ENCODE measurements at regions of chr1 and their contacts with region 1.

Region 1: DNA sequence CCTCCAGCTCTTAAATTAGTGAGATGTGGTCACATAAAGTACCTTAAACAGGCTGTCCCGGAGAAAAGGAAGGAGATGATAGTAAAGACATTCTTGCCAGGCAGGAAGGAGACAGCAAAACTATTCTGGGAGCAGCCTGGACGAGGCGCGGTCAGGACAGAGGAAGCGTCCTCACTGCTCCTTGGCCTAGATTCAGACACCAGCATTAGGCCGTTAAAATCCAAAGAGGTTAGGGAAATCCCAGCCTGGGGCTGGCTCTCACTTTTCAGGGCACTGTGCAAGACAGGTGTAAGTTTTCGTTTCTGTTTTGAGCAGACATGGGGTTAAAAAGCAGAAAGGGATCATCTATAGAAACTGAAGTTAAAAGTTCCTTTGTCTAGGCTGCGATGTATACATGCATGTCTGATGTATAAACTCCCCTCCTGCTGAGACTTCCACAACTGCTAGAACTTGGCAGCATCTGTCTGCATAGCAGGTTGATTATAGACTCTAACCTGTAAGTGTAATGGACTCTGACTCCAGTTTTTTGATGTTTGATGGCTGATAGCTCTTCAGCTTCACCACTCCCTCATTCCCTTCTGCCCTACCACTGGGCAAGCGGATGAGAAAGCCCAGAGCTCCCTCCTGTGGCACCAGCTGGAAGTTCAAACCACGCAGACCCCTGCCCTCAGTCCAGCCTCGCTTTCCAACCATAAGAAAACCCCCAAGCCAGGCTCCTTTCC is 21.5 kb downstream of the STPG1 start:
- DNase-seq: peak; percentile 72
- H3K4me3 ChIP-seq: no peak overlapping the region; a peak in 1 of 4 replicates
- H3K27ac ChIP-seq: peak overlapping the region in 1 of 2 experiments; percentile 37; a peak in 1 of 4 replicates
- H3K4me1 ChIP-seq: peaks cover 0 to 15% of the 10 kb centered on the region in 2 experiments; a peak in 3 of 4 replicates
- H3K27me3 ChIP-seq: no peaks in the 10 kb centered on the region
- CTCF ChIP-seq: peak; percentile 74
- EP300 ChIP-seq: no peak
- RAD21 ChIP-seq: peak; percentile 89

Region 2: GRCh38 chr1:24157918-24158481 is 234.0 kb before region 1 on chr1:
- CTCF ChIA-PET with region 1: interaction called, 16 read pairs
- POLR2A ChIA-PET with region 1: no interaction called
- DNase-seq: peak; percentile 48
- H3K4me3 ChIP-seq: no peak overlapping the region
- H3K27ac ChIP-seq: no peak overlapping the region
- H3K4me1 ChIP-seq: peaks cover 0 to 11% of the 10 kb centered on the region in 2 experiments; a peak in 1 of 4 replicates
- H3K27me3 ChIP-seq: peaks cover 18% of the 10 kb centered on the region; the same call in 1 of the 2 replicates
- CTCF ChIP-seq: peak; percentile 44
- EP300 ChIP-seq: no peak
- RAD21 ChIP-seq: no peak

Region 3: DNA sequence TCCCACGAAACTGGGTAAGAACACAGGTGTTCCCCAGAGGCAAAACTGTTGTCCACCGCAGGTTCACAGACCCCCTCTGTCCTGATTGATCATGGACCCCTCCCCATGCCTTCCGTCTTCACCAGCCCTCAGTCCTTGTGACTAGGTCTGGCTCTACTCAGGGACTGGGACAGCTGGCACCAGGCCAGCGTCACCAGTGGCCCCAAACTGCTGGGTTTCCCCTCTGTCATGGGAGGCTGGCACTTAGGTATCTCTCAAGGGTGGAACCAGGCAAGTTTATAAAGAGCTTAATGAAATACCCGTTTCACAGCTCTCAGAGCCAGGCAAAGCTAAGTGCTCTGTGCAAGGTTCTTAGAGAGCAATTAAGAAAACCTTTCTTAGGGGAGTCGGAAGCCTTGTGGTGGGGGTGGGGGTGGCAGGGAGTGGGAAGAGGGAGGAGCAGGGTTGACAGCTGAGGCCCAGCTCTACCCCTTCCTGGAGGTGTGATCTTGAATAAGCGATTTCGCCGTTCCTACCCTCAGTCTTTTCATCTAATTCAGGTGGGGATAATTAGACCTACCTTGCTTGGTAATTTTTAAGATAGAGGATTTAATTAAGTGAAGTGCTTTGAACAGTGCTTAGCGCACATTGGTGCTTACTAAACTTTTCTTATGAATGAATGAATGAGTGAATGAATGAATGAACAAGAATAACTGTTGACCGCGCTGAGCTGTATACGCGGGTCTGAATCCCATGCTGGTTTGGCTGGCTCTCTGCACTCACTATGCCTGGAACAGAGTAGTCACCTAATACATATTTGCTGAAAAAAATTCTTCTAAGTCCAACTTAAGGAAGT is 169.8 kb before region 1 on chr1:
- CTCF ChIA-PET with region 1: interaction called, 21 read pairs
- POLR2A ChIA-PET with region 1: no interaction called
- DNase-seq: no peak
- H3K4me3 ChIP-seq: no peak overlapping the region
- H3K27ac ChIP-seq: no peak overlapping the region
- H3K4me1 ChIP-seq: no peaks in the 10 kb centered on the region; a peak in 1 of 4 replicates
- H3K27me3 ChIP-seq: peaks cover 15% of the 10 kb centered on the region; the same call in 1 of the 2 replicates
- CTCF ChIP-seq: no peak
- EP300 ChIP-seq: no peak
- RAD21 ChIP-seq: no peak

Region 4: GRCh38 chr1:24321697-24322469 is 70.2 kb before region 1 on chr1:
- CTCF ChIA-PET with region 1: interaction called, 18 read pairs
- POLR2A ChIA-PET with region 1: no interaction called
- DNase-seq: no peak
- H3K4me3 ChIP-seq: no peak overlapping the region
- H3K27ac ChIP-seq: no peak overlapping the region
- H3K4me1 ChIP-seq: peaks cover 0 to 9% of the 10 kb centered on the region in 2 experiments; a peak in 1 of 4 replicates
- H3K27me3 ChIP-seq: 0 out of 2 replicates have a peak, but pooled peaks cover 17% of the 10 kb centered on the region
- CTCF ChIP-seq: no peak
- EP300 ChIP-seq: no peak
- RAD21 ChIP-seq: no peak

Region 5: GRCh38 chr1:24374891-24375786 is 16.9 kb before region 1 on chr1:
- CTCF ChIA-PET with region 1: interaction called, 25 read pairs
- POLR2A ChIA-PET with region 1: no interaction called
- DNase-seq: no peak
- H3K4me3 ChIP-seq: no peak overlapping the region
- H3K27ac ChIP-seq: 0 out of 4 replicates have a peak overlapping the region, but pooled peaks of 1 of the 2 experiments have one; percentile 10
- H3K4me1 ChIP-seq: no peaks in the 10 kb centered on the region
- H3K27me3 ChIP-seq: no peaks in the 10 kb centered on the region
- CTCF ChIP-seq: no peak
- EP300 ChIP-seq: no peak
- RAD21 ChIP-seq: no peak

Region 6: GRCh38 chr1:24438423-24438901 is 46.4 kb after region 1 on chr1:
- CTCF ChIA-PET with region 1: no interaction called
- POLR2A ChIA-PET with region 1: no interaction called
- DNase-seq: peak; percentile 70
- H3K4me3 ChIP-seq: no peak overlapping the region
- H3K27ac ChIP-seq: no peak overlapping the region; a peak in 1 of 4 replicates
- H3K4me1 ChIP-seq: peaks cover 0 to 19% of the 10 kb centered on the region in 2 experiments; a peak in 1 of 4 replicates
- H3K27me3 ChIP-seq: no peaks in the 10 kb centered on the region
- CTCF ChIP-seq: no peak
- EP300 ChIP-seq: no peak
- RAD21 ChIP-seq: peak; percentile 39; the same call in 1 of the 2 replicates

Region 7: GRCh38 chr1:24635195-24635843 is 243.3 kb after region 1 on chr1:
- CTCF ChIA-PET with region 1: interaction called, 36 read pairs
- POLR2A ChIA-PET with region 1: no interaction called
- DNase-seq: peak; percentile 66
- H3K4me3 ChIP-seq: no peak overlapping the region
- H3K27ac ChIP-seq: no peak overlapping the region
- H3K4me1 ChIP-seq: no peaks in the 10 kb centered on the region
- H3K27me3 ChIP-seq: no peaks in the 10 kb centered on the region
- CTCF ChIP-seq: peak; percentile 76
- EP300 ChIP-seq: no peak
- RAD21 ChIP-seq: peak; percentile 86